ENCODE measurements at regions of chr7 and their contacts with region 1.

Region 1: GRCh38 chr7:12067141-12067831 is 143.8 kb upstream of the TMEM106B start:
- DNase-seq: peak; percentile 81
- H3K4me3 ChIP-seq: no peak overlapping the region
- H3K27ac ChIP-seq: no peak overlapping the region
- H3K4me1 ChIP-seq: peaks cover 15% of the 10 kb centered on the region
- H3K27me3 ChIP-seq: no peaks in the 10 kb centered on the region
- CTCF ChIP-seq: peak; percentile 68

Region 2: DNA sequence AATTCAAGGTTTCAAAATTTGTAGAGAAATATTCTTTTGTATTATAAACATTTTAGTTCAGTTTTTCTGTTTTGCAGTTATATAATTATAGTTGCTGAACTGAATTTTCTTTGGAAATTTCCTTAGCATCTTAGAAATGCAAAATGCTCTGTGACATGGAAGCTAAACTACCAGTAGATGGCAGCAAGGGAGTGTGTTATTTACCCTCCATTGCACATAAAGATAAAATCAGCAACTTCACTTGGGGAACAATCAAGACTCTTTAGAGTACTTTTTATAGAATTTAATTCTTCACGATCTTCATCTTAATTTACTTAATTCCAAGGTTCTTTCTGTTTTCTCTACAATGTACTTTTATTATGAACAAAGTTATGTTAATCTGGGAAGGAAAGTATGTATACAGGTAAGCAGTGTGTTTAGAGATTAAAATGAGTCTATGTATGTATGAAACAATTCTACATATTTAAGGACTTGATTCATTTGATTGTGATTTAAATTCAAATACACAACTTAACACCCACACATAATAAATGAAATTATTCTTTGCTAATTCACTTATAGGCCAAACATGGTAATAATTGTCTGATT is 639.5 kb before region 1 on chr7:
- CTCF ChIA-PET with region 1: no interaction called
- POLR2A ChIA-PET with region 1: no interaction called
- intact Hi-C with region 1: loop called (anchors 5 kb)
- DNase-seq: peak; percentile 74
- H3K4me3 ChIP-seq: no peak overlapping the region
- H3K27ac ChIP-seq: no peak overlapping the region
- H3K4me1 ChIP-seq: no peaks in the 10 kb centered on the region
- H3K27me3 ChIP-seq: no peaks in the 10 kb centered on the region
- CTCF ChIP-seq: peak; percentile 87

Region 3: GRCh38 chr7:11753433-11753832 is 313.9 kb before region 1 on chr7:
- CTCF ChIA-PET with region 1: no interaction called
- POLR2A ChIA-PET with region 1: no interaction called
- intact Hi-C with region 1: loop called (anchors 10 kb)
- DNase-seq: no peak
- H3K4me3 ChIP-seq: no peak overlapping the region
- H3K27ac ChIP-seq: no peak overlapping the region
- H3K4me1 ChIP-seq: no peaks in the 10 kb centered on the region
- H3K27me3 ChIP-seq: no peaks in the 10 kb centered on the region
- CTCF ChIP-seq: no peak

Region 4: GRCh38 chr7:11831736-11832495 is 235.4 kb before region 1 on chr7 and contains the start of gene THSD7A:
- CTCF ChIA-PET with region 1: no interaction called
- POLR2A ChIA-PET with region 1: no interaction called
- intact Hi-C with region 1: loop called (anchors 2 kb)
- DNase-seq: peak; percentile 66
- H3K4me3 ChIP-seq: peak within 1 kb of the TSS; percentile 54
- H3K27ac ChIP-seq: no peak within 1 kb of the TSS
- H3K4me1 ChIP-seq: peaks cover 26% of the 10 kb centered on the region
- H3K27me3 ChIP-seq: no peaks in the 10 kb centered on the region
- CTCF ChIP-seq: no peak; the same call in 1 of the 2 replicates
- total RNA-seq, gene THSD7A: 0.55 and 0.64 TPM in 2 replicates

Region 5: DNA sequence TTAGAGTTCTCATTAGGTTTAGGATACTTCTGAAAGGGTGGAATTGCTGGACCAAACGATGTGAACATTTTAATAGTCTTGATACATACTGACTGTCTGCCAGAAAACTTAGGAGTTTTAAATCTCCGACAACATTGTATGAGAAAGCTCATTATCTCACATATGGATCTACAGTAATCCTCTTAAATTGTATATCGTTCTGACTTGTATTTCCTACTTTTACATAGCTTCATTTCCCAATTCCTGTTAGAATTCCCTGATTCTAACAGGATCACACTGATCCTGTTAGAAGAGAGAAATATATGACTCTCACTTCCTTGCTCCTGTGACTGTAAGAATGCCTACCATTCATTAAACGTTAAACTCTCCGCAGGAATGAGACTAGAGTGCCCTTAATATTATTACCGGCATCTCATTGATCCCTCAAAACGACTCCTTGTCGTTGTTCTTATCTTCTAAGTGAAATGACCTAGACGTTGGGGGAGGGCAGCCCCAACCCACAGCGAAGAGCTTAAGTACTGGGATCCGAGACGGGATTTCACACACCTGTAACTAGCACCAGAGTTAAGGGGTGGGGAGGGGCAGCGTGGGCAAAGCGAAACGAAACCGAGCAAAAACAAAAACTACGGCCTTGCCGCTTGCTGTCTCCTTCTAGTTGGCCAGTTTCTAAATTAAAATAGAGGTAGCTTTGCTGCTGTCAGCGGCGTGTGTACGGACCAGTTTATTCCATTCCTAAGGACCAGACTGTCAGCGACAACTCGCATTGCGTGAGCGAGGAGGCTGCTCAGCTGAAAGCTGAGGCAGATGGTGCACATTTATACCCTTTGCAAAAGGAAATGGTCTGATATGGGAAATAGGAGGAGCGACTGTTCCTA is 143.1 kb after region 1 on chr7:
- CTCF ChIA-PET with region 1: no interaction called
- POLR2A ChIA-PET with region 1: no interaction called
- intact Hi-C with region 1: no loop called
- DNase-seq: no peak
- H3K4me3 ChIP-seq: peak overlapping the region; percentile 78
- H3K27ac ChIP-seq: peak overlapping the region; percentile 88
- H3K4me1 ChIP-seq: peaks cover 10% of the 10 kb centered on the region
- H3K27me3 ChIP-seq: no peaks in the 10 kb centered on the region
- CTCF ChIP-seq: no peak

Region 6: DNA sequence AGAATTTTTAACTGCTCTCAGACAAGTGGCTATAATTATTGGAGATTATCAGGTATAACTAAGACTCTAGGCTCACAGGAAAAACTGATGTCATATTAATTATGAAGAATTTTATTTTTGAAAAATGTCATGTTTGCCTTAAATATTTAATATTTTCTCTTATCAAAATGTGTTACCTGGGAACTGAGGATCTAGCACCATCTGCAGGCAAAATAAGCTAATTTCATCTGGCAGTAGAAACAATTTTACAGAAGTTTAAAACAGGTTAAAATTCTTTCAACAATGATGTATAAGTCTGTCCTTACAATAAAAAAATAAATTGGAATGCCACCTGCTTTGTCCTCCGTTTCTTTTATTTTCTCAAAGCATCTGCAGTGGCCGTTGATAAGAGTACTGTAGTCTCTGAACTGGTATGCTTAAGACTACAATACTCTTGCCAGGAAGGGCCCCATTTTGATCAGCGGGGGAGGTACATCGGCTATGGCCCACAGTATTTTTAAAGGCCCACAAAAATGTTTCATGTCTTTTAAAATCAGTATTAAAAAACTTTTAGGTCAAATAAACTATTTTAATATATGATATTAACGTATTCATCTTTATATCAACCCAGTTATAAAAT is 255.1 kb after region 1 on chr7:
- CTCF ChIA-PET with region 1: interaction called, 5 read pairs
- POLR2A ChIA-PET with region 1: no interaction called
- intact Hi-C with region 1: loop called (anchors 1 kb)
- DNase-seq: no peak
- H3K4me3 ChIP-seq: no peak overlapping the region
- H3K27ac ChIP-seq: no peak overlapping the region
- H3K4me1 ChIP-seq: no peaks in the 10 kb centered on the region
- H3K27me3 ChIP-seq: no peaks in the 10 kb centered on the region
- CTCF ChIP-seq: peak; percentile 82

Region 7: GRCh38 chr7:12490117-12490688 is 422.9 kb after region 1 on chr7:
- CTCF ChIA-PET with region 1: interaction called, 4 read pairs
- POLR2A ChIA-PET with region 1: no interaction called
- intact Hi-C with region 1: loop called (anchors 2 kb)
- DNase-seq: peak; percentile 51
- H3K4me3 ChIP-seq: no peak overlapping the region
- H3K27ac ChIP-seq: no peak overlapping the region
- H3K4me1 ChIP-seq: peaks cover 8% of the 10 kb centered on the region
- H3K27me3 ChIP-seq: no peaks in the 10 kb centered on the region
- CTCF ChIP-seq: peak; percentile 62

Region 8: DNA sequence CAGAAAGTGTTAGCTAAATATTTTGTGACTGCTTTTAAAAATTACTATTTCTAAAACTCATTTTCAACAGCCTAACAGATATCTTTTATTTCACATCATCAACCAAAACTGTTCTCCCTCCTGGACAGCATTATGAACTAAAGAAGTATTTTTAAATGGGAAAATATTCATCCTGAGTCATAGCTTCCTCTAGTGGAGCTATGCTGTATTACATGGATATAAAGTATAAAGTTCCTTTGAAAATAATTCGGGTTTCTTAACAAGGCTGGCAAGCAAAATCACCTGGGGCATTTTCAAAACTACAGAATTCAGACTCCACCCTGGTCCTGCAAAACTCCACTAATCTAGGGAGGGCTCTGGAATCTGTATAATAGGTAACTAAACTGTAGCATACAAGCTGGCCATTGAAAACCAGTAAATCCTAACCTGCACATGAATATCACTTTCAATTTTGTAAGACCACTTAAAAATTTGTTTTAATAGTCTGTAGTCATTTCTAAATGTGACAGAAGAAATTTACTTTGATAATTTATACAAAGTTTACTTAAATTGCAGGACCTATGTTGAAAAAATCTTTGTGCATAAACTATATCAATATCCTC is 556.7 kb after region 1 on chr7:
- CTCF ChIA-PET with region 1: no interaction called
- POLR2A ChIA-PET with region 1: no interaction called
- intact Hi-C with region 1: loop called (anchors 10 kb)
- DNase-seq: peak; percentile 56
- H3K4me3 ChIP-seq: peak overlapping the region; percentile 3
- H3K27ac ChIP-seq: no peak overlapping the region
- H3K4me1 ChIP-seq: no peaks in the 10 kb centered on the region
- H3K27me3 ChIP-seq: no peaks in the 10 kb centered on the region
- CTCF ChIP-seq: peak; percentile 81